Activated CD4-positive, alpha-beta T cell treated with anti-CD3 and anti-CD28 coated beads for 36 hours (primary cell): ENCODE measurements at regions of chr2 and their contacts with region 1.

Region 1: DNA sequence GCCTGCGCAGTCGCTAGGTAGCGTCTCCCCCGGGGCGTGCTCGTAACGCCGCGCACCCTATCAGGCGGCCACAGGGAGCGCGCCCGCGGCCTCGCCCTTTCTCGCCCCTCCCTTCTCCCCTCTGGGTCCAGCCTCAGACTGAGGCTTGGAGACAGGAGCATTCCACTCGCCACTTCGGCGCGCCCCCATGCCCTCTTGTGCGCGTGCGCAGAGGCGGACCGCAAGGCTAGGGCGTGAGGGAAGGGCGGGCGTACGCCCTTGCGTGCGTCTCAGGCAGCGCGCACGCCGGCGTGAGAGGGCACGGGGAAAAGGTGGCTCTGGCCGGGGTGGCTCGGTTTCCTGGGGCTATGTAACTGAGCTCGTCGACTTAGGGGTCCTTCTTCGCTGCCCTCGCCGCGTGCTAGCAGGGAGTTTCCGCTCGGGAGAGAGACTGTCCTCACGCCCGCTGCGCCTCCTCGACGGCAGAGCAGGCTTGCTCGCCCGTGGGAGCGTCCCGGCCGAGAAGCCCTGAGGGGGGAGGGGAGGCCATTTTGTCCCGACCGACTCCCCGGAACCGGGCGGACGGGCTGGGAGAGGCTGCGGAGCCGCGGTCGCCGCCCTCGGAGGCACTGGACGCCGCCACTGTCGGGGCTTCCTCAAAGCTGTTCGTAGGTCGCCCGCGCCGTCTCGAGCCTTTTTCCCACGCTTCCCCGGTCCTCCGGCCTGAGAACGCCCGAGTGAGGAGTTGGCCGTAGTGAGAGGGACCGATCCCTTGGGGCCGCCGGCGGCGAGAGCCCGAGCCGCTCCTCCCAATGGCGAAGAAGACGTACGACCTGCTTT is at the start of gene RAB10:
- DNase-seq: peak; percentile 99
- ATAC-seq: peak; percentile 95
- H3K4me3 Mint-ChIP-seq: peak within 1 kb of the TSS; percentile 98
- H3K27ac Mint-ChIP-seq: peak within 1 kb of the TSS; percentile 90
- H3K4me1 Mint-ChIP-seq: peaks cover 28% of the 10 kb centered on the region
- H3K27me3 Mint-ChIP-seq: no peaks in the 10 kb centered on the region
- total RNA-seq, gene RAB10: 103 to 160 TPM

Region 2: DNA sequence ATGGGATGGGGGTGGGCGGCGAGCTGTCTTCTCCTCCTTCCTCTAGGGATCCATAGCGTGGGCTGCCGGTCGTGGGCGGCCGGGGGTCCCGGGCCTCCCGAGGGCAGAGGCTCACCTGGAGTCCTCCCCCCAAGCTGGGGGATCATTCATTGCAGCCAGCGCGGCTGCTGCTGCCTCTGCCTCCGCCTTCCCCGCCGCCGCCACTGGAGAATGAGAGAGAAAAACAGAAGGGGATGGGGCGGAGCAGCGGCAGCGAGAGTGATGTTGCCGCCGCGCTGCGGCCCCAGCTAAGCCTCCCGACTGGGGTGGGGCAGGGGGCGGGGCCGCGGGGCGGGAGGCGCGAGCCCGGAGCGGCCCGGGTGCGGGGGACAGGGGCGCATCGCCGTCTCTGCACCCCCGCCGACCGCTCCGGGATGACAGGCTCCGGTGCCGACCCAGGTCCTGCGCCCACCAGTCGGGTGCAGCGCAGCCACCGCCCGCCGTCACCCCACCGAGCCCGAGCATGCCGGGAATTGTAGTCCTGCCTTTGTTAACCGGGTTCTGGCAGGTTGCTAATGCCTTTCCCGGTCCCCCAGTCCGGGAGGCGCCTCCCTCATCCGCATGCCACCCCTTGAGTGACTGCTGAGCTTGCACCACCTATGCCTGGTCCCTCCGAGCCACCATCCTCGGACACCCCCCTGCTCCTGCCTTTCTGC is 51.6 kb before region 1 on chr2 and contains the start of gene KIF3C:
- CTCF ChIA-PET with region 1: interaction called, 3 read pairs
- POLR2A ChIA-PET with region 1: no interaction called
- intact Hi-C with region 1: loop called (anchors 1 to 2 kb)
- DNase-seq: peak; percentile 85
- ATAC-seq: peak; percentile 89
- H3K4me3 Mint-ChIP-seq: peak within 1 kb of the TSS; percentile 77
- H3K27ac Mint-ChIP-seq: peak within 1 kb of the TSS; percentile 25
- H3K4me1 Mint-ChIP-seq: peaks cover 4% of the 10 kb centered on the region
- H3K27me3 Mint-ChIP-seq: no peaks in the 10 kb centered on the region
- total RNA-seq, gene KIF3C: 5.2 to 5.3 TPM

Region 3: DNA sequence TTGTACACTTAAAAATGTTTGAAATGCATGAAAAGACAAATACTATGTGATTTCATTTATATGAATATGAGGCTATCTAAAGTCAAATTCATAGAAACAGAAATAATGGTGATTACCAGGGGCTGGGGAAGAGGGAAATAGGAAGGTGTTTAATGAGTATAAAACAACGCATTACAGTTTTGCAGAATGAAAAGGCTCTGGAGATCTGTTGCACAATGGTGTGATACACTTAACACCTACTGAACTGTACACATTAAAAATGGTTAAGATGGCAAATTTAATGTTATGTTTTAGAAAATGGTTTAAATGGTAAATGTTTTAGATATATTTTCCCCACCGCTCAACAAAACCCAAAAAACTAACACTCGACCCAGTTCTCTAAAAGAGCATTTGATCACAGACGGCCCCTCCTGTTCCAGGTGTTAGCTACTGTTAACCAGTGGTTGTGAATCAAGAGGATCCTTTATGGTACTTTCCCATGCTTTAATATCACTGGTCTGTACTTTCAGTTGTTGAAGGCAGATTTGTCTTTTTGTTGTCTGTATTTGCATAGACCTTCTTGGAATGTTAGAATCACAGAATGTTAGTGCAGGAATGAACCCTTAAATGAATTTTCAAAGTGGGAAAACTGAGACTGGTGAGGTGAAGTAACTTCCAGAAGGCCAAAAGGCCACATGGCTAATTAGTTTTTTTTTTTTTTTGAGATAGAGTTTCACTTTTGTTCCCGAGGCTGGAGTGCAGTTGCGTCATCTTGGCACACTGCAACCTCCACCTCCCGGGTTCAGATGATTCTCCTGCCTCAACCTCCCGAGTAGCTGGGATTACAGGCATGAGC is 10.1 kb after region 1 on chr2:
- CTCF ChIA-PET with region 1: interaction called, 5 read pairs
- POLR2A ChIA-PET with region 1: no interaction called
- intact Hi-C with region 1: loop called (anchors 1 kb)
- DNase-seq: peak; percentile 34
- ATAC-seq: peak; percentile 85
- H3K4me3 Mint-ChIP-seq: peak overlapping the region; percentile 17
- H3K27ac Mint-ChIP-seq: peak overlapping the region; percentile 40
- H3K4me1 Mint-ChIP-seq: peaks cover 50% of the 10 kb centered on the region
- H3K27me3 Mint-ChIP-seq: no peaks in the 10 kb centered on the region

Region 4: GRCh38 chr2:26088032-26088643 is 54.1 kb after region 1 on chr2:
- CTCF ChIA-PET with region 1: interaction called, 5 read pairs
- POLR2A ChIA-PET with region 1: interaction called, 3 read pairs
- intact Hi-C with region 1: loop called (anchors 1 to 5 kb)
- DNase-seq: peak; percentile 27
- ATAC-seq: peak; percentile 66
- H3K4me3 Mint-ChIP-seq: no peak overlapping the region
- H3K27ac Mint-ChIP-seq: no peak overlapping the region
- H3K4me1 Mint-ChIP-seq: peaks cover 56% of the 10 kb centered on the region
- H3K27me3 Mint-ChIP-seq: no peaks in the 10 kb centered on the region

Region 5: GRCh38 chr2:26244309-26245121 is 210.5 kb after region 1 on chr2 and contains the starts of genes HADHA and HADHB:
- CTCF ChIA-PET with region 1: no interaction called
- POLR2A ChIA-PET with region 1: interaction called, 3 read pairs
- intact Hi-C with region 1: loop called in 1 of 2 experiments (anchors 1 kb)
- DNase-seq: peak; percentile 90
- ATAC-seq: peak; percentile 80
- H3K4me3 Mint-ChIP-seq: peak within 1 kb of the TSS; percentile 99
- H3K27ac Mint-ChIP-seq: peak within 1 kb of the TSS; percentile 98
- H3K4me1 Mint-ChIP-seq: peaks cover 47% of the 10 kb centered on the region
- H3K27me3 Mint-ChIP-seq: no peaks in the 10 kb centered on the region
- total RNA-seq, gene HADHA: 149 to 154 TPM
- total RNA-seq, gene HADHB: 71.4 to 73.4 TPM

Region 6: GRCh38 chr2:26292665-26293064 is 258.6 kb after region 1 on chr2:
- CTCF ChIA-PET with region 1: no interaction called
- POLR2A ChIA-PET with region 1: no interaction called
- intact Hi-C with region 1: no loop called
- DNase-seq: no peak
- ATAC-seq: no peak
- H3K4me3 Mint-ChIP-seq: no peak overlapping the region
- H3K27ac Mint-ChIP-seq: peak overlapping the region; percentile 31
- H3K4me1 Mint-ChIP-seq: peaks cover 5% of the 10 kb centered on the region
- H3K27me3 Mint-ChIP-seq: no peaks in the 10 kb centered on the region